Right cardiac atrium (tissue), 5 donors: ENCODE measurements at regions of chr2 and their contacts with region 1.

Region 1: GRCh38 chr2:67650291-67651133 is 253.4 kb downstream of the ETAA1 start:
- DNase-seq: peak; percentile 83 to 90 (median 90)
- ATAC-seq: peak; percentile 92 to 94
- H3K4me3 ChIP-seq: no peak overlapping the region
- H3K27ac ChIP-seq: peak overlapping the region; percentile 49
- H3K4me1 ChIP-seq: peaks cover 7% of the 10 kb centered on the region
- H3K27me3 ChIP-seq: no peaks in the 10 kb centered on the region

Region 2: DNA sequence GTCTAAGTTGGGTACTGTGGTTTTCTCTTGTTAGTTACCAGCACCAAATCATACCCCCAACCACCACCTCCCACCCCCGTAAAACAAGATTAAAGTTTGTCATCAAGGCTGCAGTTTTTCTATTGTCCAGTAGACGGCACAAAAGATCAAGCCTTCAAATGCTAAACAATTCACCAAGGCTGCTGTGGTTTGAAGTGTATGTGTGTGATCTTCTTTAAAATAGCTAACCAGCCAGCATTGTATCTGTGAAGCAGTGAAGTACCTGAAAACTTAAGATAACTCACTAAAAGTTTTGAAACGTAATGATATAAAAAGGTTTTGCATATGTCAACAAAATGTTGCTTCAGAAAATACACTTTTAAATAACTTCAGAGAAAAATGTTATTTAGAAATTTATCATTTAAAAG is 1221.4 kb before region 1 on chr2:
- intact Hi-C with region 1: loop called in 2 of 4 experiments (anchors 10 kb)
- DNase-seq: no peak
- ATAC-seq: no peak
- H3K4me3 ChIP-seq: no peak overlapping the region
- H3K27ac ChIP-seq: no peak overlapping the region
- H3K4me1 ChIP-seq: no peaks in the 10 kb centered on the region
- H3K27me3 ChIP-seq: peaks cover 2% of the 10 kb centered on the region

Region 3: GRCh38 chr2:66574701-66575624 is 1075.5 kb before region 1 on chr2:
- intact Hi-C with region 1: loop called in 1 of 4 experiments (anchors 10 kb)
- DNase-seq: peak; percentile 50 to 78 (median 76)
- ATAC-seq: peak; percentile 79 to 83
- H3K4me3 ChIP-seq: peak overlapping the region; percentile 83
- H3K27ac ChIP-seq: peak overlapping the region; percentile 36
- H3K4me1 ChIP-seq: no peaks in the 10 kb centered on the region
- H3K27me3 ChIP-seq: peaks cover 2% of the 10 kb centered on the region

Region 4: GRCh38 chr2:67277450-67277849 is 373.1 kb before region 1 on chr2:
- intact Hi-C with region 1: no loop called
- DNase-seq: no peak
- ATAC-seq: no peak
- H3K4me3 ChIP-seq: no peak overlapping the region
- H3K27ac ChIP-seq: no peak overlapping the region
- H3K4me1 ChIP-seq: no peaks in the 10 kb centered on the region
- H3K27me3 ChIP-seq: no peaks in the 10 kb centered on the region

Region 5: DNA sequence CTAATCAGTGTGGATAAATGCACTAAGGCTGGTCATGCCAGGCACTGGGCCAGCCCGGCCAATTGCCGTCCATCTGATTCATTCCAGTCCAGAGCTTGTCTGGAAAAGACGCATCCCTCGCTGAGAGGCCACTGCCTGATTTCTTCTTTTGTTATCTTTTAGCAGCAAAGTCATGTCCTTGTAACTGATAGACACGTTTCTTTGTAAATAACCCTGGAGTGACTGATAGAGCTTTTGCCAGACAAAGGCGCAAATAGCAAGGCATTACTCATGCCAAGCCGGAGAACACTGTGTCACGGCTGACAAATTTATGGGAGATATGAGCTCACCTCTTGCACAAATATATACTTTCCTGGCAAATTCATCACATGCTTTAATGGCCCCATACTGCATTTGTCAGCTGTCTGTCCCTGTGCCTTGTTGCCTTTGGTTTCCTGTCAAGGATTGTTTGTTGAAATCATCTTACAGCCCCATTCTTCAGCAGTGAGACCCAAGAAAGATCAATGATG is 89.0 kb before region 1 on chr2:
- intact Hi-C with region 1: loop called in 1 of 4 experiments (anchors 10 kb)
- DNase-seq: peak; percentile 84 to 89 (median 88)
- ATAC-seq: peak; percentile 91 to 93
- H3K4me3 ChIP-seq: no peak overlapping the region
- H3K27ac ChIP-seq: peak overlapping the region; percentile 80
- H3K4me1 ChIP-seq: peaks cover 2% of the 10 kb centered on the region
- H3K27me3 ChIP-seq: no peaks in the 10 kb centered on the region